Activated naive CD4-positive, alpha-beta T cell treated with anti-CD3 and anti-CD28 coated beads for 36 hours (primary cell): ENCODE measurements at regions of chr1 and their contacts with region 1.

Region 1: GRCh38 chr1:16946646-16947045 is 24.9 kb downstream of the CROCC start:
- DNase-seq: no peak
- H3K4me3 Mint-ChIP-seq: no peak overlapping the region
- H3K27ac Mint-ChIP-seq: no peak overlapping the region
- H3K4me1 Mint-ChIP-seq: no peaks in the 10 kb centered on the region
- H3K27me3 Mint-ChIP-seq: no peaks in the 10 kb centered on the region

Region 2: GRCh38 chr1:17045634-17046333 is 99.1 kb after region 1 on chr1:
- CTCF ChIA-PET with region 1: interaction called, 15 read pairs
- intact Hi-C with region 1: loop called (anchors 1 kb)
- DNase-seq: no peak
- H3K4me3 Mint-ChIP-seq: no peak overlapping the region
- H3K27ac Mint-ChIP-seq: no peak overlapping the region
- H3K4me1 Mint-ChIP-seq: peaks cover 16% of the 10 kb centered on the region
- H3K27me3 Mint-ChIP-seq: no peaks in the 10 kb centered on the region